Activated CD4-positive, alpha-beta T cell treated with anti-CD3 and anti-CD28 coated beads for 36 hours (primary cell): ENCODE measurements at regions of chr2 and their contacts with region 1.

Region 1: GRCh38 chr2:218852911-218853667 is 6.5 kb upstream of the WNT6 start:
- DNase-seq: peak; percentile 81
- ATAC-seq: peak; percentile 84
- H3K4me3 Mint-ChIP-seq: no peak overlapping the region
- H3K27ac Mint-ChIP-seq: no peak overlapping the region
- H3K4me1 Mint-ChIP-seq: no peaks in the 10 kb centered on the region
- H3K27me3 Mint-ChIP-seq: peaks cover 54% of the 10 kb centered on the region

Region 2: GRCh38 chr2:218659258-218659987 is 193.7 kb before region 1 on chr2 and contains the starts of genes BCS1L and ZNF142:
- CTCF ChIA-PET with region 1: interaction called, 24 read pairs
- POLR2A ChIA-PET with region 1: no interaction called
- intact Hi-C with region 1: no loop called
- DNase-seq: peak; percentile 98
- ATAC-seq: peak; percentile 95
- H3K4me3 Mint-ChIP-seq: peak within 1 kb of the TSS; percentile 88
- H3K27ac Mint-ChIP-seq: peak within 1 kb of the TSS; percentile 89
- H3K4me1 Mint-ChIP-seq: peaks cover 35% of the 10 kb centered on the region
- H3K27me3 Mint-ChIP-seq: no peaks in the 10 kb centered on the region
- total RNA-seq, gene BCS1L: 74.3 to 92.3 TPM
- total RNA-seq, gene ZNF142: 31.5 to 42.4 TPM

Region 3: GRCh38 chr2:218710687-218711549 is 142.2 kb before region 1 on chr2 and contains the start of gene TTLL4:
- CTCF ChIA-PET with region 1: interaction called, 5 read pairs
- POLR2A ChIA-PET with region 1: no interaction called
- intact Hi-C with region 1: loop called in 1 of 2 experiments (anchors 5 kb)
- DNase-seq: peak; percentile 99
- ATAC-seq: peak; percentile 98
- H3K4me3 Mint-ChIP-seq: peak within 1 kb of the TSS; percentile 96
- H3K27ac Mint-ChIP-seq: peak within 1 kb of the TSS; percentile 80
- H3K4me1 Mint-ChIP-seq: peaks cover 20% of the 10 kb centered on the region
- H3K27me3 Mint-ChIP-seq: no peaks in the 10 kb centered on the region
- total RNA-seq, gene TTLL4: 33.7 to 46.6 TPM

Region 4: DNA sequence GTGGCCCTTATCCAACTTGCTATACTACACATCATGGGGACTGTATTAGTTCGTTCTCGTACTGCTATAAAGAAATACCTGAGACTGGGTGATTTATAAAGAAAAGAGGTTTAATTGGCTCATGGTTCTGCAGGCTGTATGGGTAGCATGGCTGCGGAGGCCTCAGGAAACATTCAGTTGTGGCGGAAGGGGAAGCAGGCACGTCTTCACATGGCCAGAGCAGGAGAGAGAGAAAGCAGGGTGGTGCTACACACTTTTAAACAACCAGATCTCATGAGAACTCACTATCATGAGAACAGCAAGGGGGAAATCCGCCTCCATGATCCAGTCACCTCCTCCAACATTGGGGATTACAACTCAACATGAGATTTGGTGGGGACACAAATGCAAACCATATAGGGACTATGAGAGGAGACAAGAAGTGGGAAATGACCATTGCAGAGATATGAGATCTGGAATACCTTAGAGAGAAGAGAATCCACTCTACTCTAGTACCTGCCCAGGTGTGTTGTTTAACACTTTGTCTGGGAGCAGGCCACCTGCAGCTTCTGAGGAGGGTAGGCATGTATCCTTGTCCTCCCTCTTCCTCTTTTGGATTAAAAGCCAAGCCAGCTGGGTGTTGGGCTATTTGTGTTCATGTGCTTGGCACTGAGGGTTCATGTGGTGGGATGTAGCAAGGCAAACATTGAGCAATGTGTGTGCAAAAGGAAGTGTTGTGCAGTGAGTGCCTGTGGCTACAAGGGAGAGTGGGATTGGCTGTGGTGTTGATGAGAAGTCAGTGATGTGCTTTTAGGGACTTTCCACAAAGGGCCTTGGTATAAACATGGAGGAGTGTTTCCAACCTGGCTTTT is 119.7 kb before region 1 on chr2:
- CTCF ChIA-PET with region 1: interaction called, 40 read pairs
- POLR2A ChIA-PET with region 1: no interaction called
- intact Hi-C with region 1: no loop called
- DNase-seq: peak; percentile 55
- ATAC-seq: peak; percentile 98
- H3K4me3 Mint-ChIP-seq: no peak overlapping the region
- H3K27ac Mint-ChIP-seq: peak overlapping the region; percentile 63
- H3K4me1 Mint-ChIP-seq: peaks cover 30% of the 10 kb centered on the region
- H3K27me3 Mint-ChIP-seq: no peaks in the 10 kb centered on the region

Region 5: DNA sequence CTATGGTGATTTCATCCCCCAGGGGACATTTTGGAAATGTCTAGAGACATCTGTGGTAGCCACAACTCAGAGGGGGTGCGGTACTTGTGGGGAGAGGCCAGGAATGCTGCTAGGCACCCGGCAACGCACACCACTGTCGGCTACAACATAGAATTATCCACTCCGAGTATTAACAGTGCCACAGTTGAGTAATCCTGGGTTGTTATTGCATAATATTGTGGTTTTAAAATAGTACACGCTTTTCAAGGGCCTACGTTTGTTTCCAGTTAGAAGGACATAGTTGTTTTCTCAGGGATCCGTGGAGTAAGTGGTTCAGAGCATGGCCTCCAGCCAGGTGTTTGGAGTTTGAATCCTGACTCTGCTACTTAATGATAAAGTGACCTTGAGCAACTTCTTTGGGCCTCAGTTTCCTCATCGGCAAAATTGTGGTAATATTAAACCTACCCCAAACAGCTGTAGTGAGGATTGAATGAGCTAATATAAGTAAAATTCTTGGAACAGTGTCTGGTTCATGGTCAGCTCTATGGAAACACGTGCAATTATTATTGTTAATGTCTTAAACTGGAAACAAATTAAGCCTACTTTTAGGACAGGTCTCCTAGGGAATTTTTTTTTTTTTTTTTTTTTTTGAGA is 46.6 kb before region 1 on chr2:
- CTCF ChIA-PET with region 1: no interaction called
- POLR2A ChIA-PET with region 1: no interaction called
- intact Hi-C with region 1: no loop called
- DNase-seq: no peak
- ATAC-seq: no peak
- H3K4me3 Mint-ChIP-seq: no peak overlapping the region
- H3K27ac Mint-ChIP-seq: no peak overlapping the region
- H3K4me1 Mint-ChIP-seq: no peaks in the 10 kb centered on the region
- H3K27me3 Mint-ChIP-seq: peaks cover 18% of the 10 kb centered on the region

Region 6: DNA sequence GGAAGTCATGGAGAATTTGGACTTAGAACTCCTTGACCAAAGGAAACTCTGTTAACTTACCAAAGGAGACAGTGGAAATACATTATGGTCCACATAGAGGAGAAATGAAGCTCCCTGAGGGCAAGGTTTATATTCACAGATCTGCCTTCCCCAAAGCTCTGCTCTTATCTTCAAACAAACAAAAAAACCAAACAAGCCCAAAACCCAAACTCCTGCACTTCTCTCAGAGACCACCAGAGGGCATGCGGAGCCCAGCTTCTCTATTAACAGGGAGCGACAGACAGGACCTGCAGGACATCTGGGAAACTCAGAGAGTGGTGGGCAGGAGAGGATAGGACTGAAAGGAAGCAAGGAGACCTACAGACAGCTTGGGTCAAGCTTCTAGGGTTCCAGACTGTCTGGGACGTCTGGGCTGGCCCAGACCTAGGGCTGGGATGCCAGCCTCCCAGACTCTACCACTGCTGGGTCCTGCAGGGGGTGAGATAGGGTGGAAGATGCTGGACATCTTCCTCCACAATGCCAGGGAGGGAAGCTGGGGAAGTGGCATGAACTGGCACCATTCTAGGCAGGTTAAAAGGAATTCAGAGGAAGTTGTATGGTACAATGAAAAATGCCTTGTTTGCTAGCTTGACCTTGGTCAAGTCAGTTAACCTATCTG is 23.6 kb after region 1 on chr2:
- CTCF ChIA-PET with region 1: interaction called, 41 read pairs
- POLR2A ChIA-PET with region 1: no interaction called
- intact Hi-C with region 1: loop called in 1 of 2 experiments (anchors 2 kb)
- DNase-seq: peak; percentile 83
- ATAC-seq: no peak
- H3K4me3 Mint-ChIP-seq: no peak overlapping the region
- H3K27ac Mint-ChIP-seq: no peak overlapping the region
- H3K4me1 Mint-ChIP-seq: peaks cover 43% of the 10 kb centered on the region
- H3K27me3 Mint-ChIP-seq: peaks cover 39% of the 10 kb centered on the region

Region 7: GRCh38 chr2:219002395-219003266 is 149.5 kb after region 1 on chr2:
- CTCF ChIA-PET with region 1: interaction called, 4 read pairs
- POLR2A ChIA-PET with region 1: no interaction called
- intact Hi-C with region 1: loop called in 1 of 2 experiments (anchors 2 kb)
- DNase-seq: peak; percentile 83
- ATAC-seq: peak; percentile 67
- H3K4me3 Mint-ChIP-seq: peak overlapping the region; percentile 14
- H3K27ac Mint-ChIP-seq: no peak overlapping the region
- H3K4me1 Mint-ChIP-seq: peaks cover 14% of the 10 kb centered on the region
- H3K27me3 Mint-ChIP-seq: peaks cover 69% of the 10 kb centered on the region

Region 8: GRCh38 chr2:219155054-219155644 is 302.1 kb after region 1 on chr2:
- CTCF ChIA-PET with region 1: interaction called, 4 read pairs
- POLR2A ChIA-PET with region 1: no interaction called
- intact Hi-C with region 1: loop called in 1 of 2 experiments (anchors 5 kb)
- DNase-seq: peak; percentile 47
- ATAC-seq: peak; percentile 47
- H3K4me3 Mint-ChIP-seq: no peak overlapping the region
- H3K27ac Mint-ChIP-seq: no peak overlapping the region
- H3K4me1 Mint-ChIP-seq: peaks cover 6% of the 10 kb centered on the region
- H3K27me3 Mint-ChIP-seq: no peaks in the 10 kb centered on the region

Region 9: GRCh38 chr2:219358170-219359075 is 505.3 kb after region 1 on chr2:
- CTCF ChIA-PET with region 1: no interaction called
- POLR2A ChIA-PET with region 1: no interaction called
- intact Hi-C with region 1: no loop called
- DNase-seq: peak; percentile 46
- ATAC-seq: peak; percentile 53
- H3K4me3 Mint-ChIP-seq: no peak overlapping the region
- H3K27ac Mint-ChIP-seq: no peak overlapping the region
- H3K4me1 Mint-ChIP-seq: peaks cover 6% of the 10 kb centered on the region
- H3K27me3 Mint-ChIP-seq: peaks cover 41% of the 10 kb centered on the region